ENCODE measurements at regions of chr12 and their contacts with region 1.

Region 1: GRCh38 chr12:108390495-108391203 is 51.5 kb upstream of the CMKLR1 start:
- DNase-seq: no peak
- ATAC-seq: peak; percentile 30
- H3K4me3 Mint-ChIP-seq: no peak overlapping the region
- H3K27ac Mint-ChIP-seq: no peak overlapping the region
- H3K4me1 Mint-ChIP-seq: peaks cover 12% of the 10 kb centered on the region
- H3K27me3 Mint-ChIP-seq: peaks cover 4% of the 10 kb centered on the region; the same call in 1 of the 2 replicates
- CTCF ChIP-seq: no peak

Region 2: GRCh38 chr12:108367436-108367835 is 23.2 kb before region 1 on chr12:
- CTCF ChIA-PET with region 1: no interaction called
- POLR2A ChIA-PET with region 1: interaction called, 10 read pairs
- DNase-seq: no peak
- ATAC-seq: no peak
- H3K4me3 Mint-ChIP-seq: no peak overlapping the region
- H3K27ac Mint-ChIP-seq: no peak overlapping the region
- H3K4me1 Mint-ChIP-seq: peaks cover 10% of the 10 kb centered on the region
- H3K27me3 Mint-ChIP-seq: no peaks in the 10 kb centered on the region
- CTCF ChIP-seq: no peak

Region 3: GRCh38 chr12:108570743-108571608 is 180.3 kb after region 1 on chr12:
- CTCF ChIA-PET with region 1: no interaction called
- POLR2A ChIA-PET with region 1: no interaction called
- DNase-seq: no peak
- ATAC-seq: peak; percentile 50; the same call in 1 of the 2 replicates
- H3K4me3 Mint-ChIP-seq: no peak overlapping the region
- H3K27ac Mint-ChIP-seq: no peak overlapping the region
- H3K4me1 Mint-ChIP-seq: no peaks in the 10 kb centered on the region
- H3K27me3 Mint-ChIP-seq: no peaks in the 10 kb centered on the region
- CTCF ChIP-seq: no peak

Measured in WTC11 (cell line).